Activated B cell treated with CpG ODN at 0.5 μM for 24 hours (primary cell): ENCODE measurements at regions of chr12 and their contacts with region 1.

Region 1: GRCh38 chr12:112430929-112431328 is 12.2 kb downstream of the PTPN11 start:
- DNase-seq: no peak
- ATAC-seq: no peak
- H3K4me3 Mint-ChIP-seq: no peak overlapping the region
- H3K27ac Mint-ChIP-seq: no peak overlapping the region
- H3K4me1 Mint-ChIP-seq: peaks cover 2% of the 10 kb centered on the region
- H3K27me3 Mint-ChIP-seq: no peaks in the 10 kb centered on the region
- CTCF ChIP-seq: no peak

Region 2: DNA sequence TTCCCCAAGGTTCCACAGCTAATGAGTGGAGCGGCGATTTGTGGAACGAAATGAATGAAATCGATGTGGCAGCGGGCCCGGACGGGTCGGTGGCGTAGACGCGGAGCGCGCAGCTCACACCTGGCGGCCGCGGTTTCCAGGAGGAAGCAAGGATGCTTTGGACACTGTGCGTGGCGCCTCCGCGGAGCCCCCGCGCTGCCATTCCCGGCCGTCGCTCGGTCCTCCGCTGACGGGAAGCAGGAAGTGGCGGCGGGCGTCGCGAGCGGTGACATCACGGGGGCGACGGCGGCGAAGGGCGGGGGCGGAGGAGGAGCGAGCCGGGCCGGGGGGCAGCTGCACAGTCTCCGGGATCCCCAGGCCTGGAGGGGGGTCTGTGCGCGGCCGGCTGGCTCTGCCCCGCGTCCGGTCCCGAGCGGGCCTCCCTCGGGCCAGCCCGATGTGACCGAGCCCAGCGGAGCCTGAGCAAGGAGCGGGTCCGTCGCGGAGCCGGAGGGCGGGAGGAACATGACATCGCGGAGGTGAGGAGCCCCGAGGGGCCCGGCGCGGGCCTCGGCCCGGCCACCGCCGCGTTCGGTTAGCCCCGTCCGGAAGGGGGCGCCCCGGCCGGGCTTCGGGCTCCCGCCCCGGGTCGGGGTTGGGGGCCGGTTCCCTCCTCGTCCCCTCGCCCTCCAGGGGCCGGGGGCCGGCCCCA is 12.2 kb before region 1 on chr12 and contains the start of gene PTPN11:
- CTCF ChIA-PET with region 1: no interaction called
- POLR2A ChIA-PET with region 1: interaction called, 14 read pairs
- intact Hi-C with region 1: no loop called
- DNase-seq: peak; percentile 96
- ATAC-seq: peak; percentile 82
- H3K4me3 Mint-ChIP-seq: peak within 1 kb of the TSS; percentile 96
- H3K27ac Mint-ChIP-seq: peak within 1 kb of the TSS; percentile 94
- H3K4me1 Mint-ChIP-seq: peaks cover 40% of the 10 kb centered on the region
- H3K27me3 Mint-ChIP-seq: no peaks in the 10 kb centered on the region
- CTCF ChIP-seq: no peak
- total RNA-seq, gene PTPN11: 69.2 and 83.1 TPM in 2 replicates